PC-9 (cell line): ENCODE measurements at regions of chr15 and their contacts with region 1.

Region 1: DNA sequence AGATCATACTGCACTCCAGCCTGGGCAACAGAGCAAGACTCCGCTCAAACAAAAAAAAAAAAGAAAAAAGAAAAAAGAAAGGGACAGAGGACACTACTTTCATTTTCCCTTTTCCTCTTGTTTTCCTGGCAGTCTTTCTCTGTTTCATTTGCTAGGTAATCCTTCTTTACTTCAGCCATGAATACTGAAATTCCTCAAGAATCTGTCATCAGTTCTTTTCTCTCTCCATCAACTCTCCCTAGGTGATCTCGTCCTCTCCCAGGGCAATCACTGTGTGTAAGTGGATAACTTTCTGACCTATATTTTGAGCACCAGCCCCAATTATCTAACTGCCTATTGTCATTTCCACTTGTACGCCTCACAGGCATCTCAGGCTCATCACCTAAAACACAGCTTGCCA is 51.5 kb downstream of the TTC23 start:
- DNase-seq: no peak
- H3K4me3 ChIP-seq: no peak overlapping the region
- H3K27ac ChIP-seq: no peak overlapping the region
- H3K4me1 ChIP-seq: no peaks in the 10 kb centered on the region
- H3K27me3 ChIP-seq: no peaks in the 10 kb centered on the region
- CTCF ChIP-seq: no peak

Region 2: DNA sequence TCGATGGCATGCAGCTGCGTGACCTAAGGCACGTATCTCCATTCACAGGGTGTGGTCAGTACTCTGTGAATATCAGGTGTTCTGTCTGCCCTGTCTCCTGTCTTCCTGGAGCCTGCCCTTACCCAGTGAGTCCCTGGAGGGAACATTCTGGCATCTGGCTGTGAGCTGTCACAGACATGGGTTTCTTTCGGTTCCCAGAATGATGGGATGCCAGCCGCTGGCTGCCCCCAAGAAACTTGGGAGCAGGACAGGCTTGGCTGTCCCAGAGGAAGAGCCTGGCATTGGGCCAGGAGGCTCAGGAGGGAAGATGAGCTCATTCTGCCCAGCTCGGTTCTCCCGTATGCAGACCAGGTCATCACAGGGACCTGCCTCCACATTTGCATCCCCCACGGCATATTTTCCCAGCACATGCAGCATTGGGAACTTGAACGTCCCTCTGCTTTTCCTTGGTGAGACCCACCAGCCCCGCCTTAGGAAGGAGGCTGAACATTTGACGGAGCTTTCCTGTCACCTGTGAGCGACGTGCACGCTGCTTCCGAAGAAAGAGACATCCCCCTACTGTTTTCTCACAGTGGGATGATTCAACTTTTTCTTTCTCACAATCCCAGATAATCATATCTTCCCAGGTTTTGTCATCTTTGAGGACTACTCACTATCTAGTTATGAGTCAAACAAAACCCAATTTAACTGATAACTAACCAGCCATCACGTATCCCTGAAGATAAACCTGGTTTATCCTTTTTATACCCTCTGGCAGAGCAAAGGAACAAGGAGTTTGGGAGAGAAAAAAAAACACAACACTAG is 168.3 kb before region 1 on chr15:
- CTCF ChIA-PET with region 1: no interaction called
- POLR2A ChIA-PET with region 1: no interaction called
- intact Hi-C with region 1: no loop called
- DNase-seq: peak in 1 of 2 experiments; percentile 19
- H3K4me3 ChIP-seq: no peak overlapping the region
- H3K27ac ChIP-seq: no peak overlapping the region
- H3K4me1 ChIP-seq: no peaks in the 10 kb centered on the region
- H3K27me3 ChIP-seq: peaks cover 7% of the 10 kb centered on the region; the same call in 1 of the 2 replicates
- CTCF ChIP-seq: no peak

Region 3: DNA sequence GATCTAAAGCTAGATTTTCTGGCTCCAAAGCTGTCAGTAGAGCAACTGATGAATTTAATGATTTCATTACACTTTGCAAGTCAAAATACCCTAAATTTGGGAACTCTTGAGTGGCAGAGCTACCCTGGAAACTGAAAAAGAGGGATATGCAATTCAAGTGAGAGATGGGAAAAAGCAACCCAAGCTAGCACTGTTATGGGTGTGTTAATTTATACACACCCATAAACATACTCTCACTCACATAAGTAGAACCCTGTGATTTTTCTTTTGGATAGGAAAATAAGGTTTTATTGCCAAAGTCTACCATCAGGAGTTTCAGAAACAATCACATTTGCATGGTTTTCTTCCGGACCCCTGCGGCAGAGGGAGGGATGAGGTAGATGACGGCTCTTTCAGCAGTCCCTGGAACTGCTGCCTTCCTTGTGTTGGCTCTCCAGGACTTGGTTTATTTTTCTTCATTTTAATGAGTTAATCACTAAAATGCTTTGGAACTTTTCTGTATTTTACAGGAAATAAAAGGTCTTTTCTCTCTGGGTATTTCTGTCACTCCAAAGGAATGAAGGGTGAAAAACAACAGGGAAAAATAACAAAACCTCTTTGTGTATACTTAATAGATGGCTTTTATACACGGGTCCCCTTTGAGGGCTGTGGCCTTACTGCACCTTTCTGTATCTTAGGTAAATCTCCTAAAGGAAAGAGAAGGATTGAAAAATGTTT is 12.3 kb before region 1 on chr15:
- CTCF ChIA-PET with region 1: no interaction called
- POLR2A ChIA-PET with region 1: interaction called, 10 read pairs
- intact Hi-C with region 1: no loop called
- DNase-seq: no peak
- H3K4me3 ChIP-seq: no peak overlapping the region
- H3K27ac ChIP-seq: no peak overlapping the region
- H3K4me1 ChIP-seq: peaks cover 7% of the 10 kb centered on the region; the same call in 1 of the 2 replicates
- H3K27me3 ChIP-seq: no peaks in the 10 kb centered on the region
- CTCF ChIP-seq: no peak